WTC11 (cell line): ENCODE measurements at regions of chr6 and their contacts with region 1.

Region 1: DNA sequence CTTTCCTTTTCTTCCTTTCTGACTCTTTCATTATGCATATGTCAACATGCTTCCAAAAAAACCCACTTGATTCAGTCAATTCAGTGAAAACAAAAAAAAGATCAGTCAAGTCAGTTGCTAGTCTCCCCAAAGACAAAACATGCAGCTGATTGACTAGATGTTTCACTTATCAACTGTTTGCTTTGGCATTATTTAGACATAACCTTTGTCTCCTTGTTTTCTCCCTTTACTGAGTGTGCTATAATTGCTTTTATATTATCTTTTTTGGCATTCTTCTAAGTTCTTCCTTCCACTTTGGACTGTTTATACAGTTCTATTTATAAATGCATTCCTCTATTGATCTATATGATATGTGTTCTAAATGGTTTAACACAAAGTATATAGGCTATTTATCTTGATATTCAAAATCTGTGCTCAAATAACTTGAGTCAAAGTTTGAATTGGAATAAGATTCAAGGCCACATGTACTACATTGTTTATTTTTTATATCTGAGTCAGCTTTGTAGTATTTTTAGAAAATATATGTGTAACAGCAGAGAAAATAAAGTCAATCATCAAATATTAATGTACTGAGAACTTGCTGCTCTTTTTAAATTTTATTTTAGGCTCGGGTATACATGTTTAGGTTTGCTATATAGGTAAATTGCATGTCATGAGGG is 260.5 kb downstream of the CENPW start:
- DNase-seq: no peak
- ATAC-seq: no peak
- H3K4me3 Mint-ChIP-seq: no peak overlapping the region
- H3K27ac Mint-ChIP-seq: no peak overlapping the region
- H3K4me1 Mint-ChIP-seq: no peaks in the 10 kb centered on the region
- H3K27me3 Mint-ChIP-seq: no peaks in the 10 kb centered on the region; the same call in 1 of the 2 replicates
- CTCF ChIP-seq: no peak

Region 2: GRCh38 chr6:126504792-126505191 is 95.6 kb before region 1 on chr6:
- CTCF ChIA-PET with region 1: no interaction called
- POLR2A ChIA-PET with region 1: no interaction called
- DNase-seq: no peak
- ATAC-seq: no peak
- H3K4me3 Mint-ChIP-seq: no peak overlapping the region
- H3K27ac Mint-ChIP-seq: no peak overlapping the region
- H3K4me1 Mint-ChIP-seq: no peaks in the 10 kb centered on the region
- H3K27me3 Mint-ChIP-seq: no peaks in the 10 kb centered on the region
- CTCF ChIP-seq: no peak

Region 3: DNA sequence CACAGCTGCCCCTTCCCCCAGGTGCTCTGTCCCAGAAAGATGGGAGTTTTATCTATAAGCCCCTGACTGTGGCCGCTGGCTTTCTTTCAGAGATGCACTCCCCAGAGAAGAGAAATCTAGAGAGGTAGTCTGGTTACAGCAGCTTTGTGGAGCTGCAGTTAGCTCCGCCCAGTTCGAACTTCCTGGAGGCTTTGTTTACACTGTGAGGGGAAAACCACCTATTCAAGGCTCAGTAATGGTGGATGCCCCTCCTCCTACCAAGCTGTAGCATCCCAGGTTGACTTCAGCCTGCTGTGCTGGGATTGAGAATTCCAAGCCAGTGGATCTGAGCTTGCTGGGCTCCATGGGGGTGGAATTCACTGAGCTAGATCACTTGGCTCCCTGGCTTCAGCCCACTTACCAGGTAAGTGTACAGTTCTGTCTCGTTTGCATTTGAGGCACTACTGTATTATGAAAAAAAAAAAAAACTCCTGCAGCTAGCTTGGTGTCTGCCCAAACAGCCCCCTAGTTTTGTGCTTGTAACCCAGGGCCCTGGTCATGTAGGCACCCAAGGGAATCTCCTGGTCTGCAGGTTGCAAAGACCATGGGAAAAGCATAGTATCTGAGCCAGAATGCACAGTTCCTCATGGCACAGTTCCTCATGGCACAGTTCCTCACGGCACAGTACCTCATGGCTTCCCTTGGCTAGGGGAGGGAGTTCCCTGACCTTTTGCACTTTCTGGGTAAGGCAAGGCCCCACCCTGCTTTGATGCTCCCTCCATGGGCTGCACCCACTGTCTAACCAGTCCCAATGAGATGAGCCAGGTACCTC is 14.5 kb after region 1 on chr6:
- CTCF ChIA-PET with region 1: no interaction called
- POLR2A ChIA-PET with region 1: interaction called, 10 read pairs
- DNase-seq: peak; percentile 57
- ATAC-seq: peak; percentile 99
- H3K4me3 Mint-ChIP-seq: no peak overlapping the region
- H3K27ac Mint-ChIP-seq: no peak overlapping the region
- H3K4me1 Mint-ChIP-seq: peaks cover 12% of the 10 kb centered on the region
- H3K27me3 Mint-ChIP-seq: no peaks in the 10 kb centered on the region
- CTCF ChIP-seq: no peak

Region 4: GRCh38 chr6:127022302-127022701 is 421.9 kb after region 1 on chr6:
- CTCF ChIA-PET with region 1: no interaction called
- POLR2A ChIA-PET with region 1: no interaction called
- DNase-seq: no peak
- ATAC-seq: no peak
- H3K4me3 Mint-ChIP-seq: no peak overlapping the region
- H3K27ac Mint-ChIP-seq: no peak overlapping the region
- H3K4me1 Mint-ChIP-seq: no peaks in the 10 kb centered on the region
- H3K27me3 Mint-ChIP-seq: no peaks in the 10 kb centered on the region
- CTCF ChIP-seq: no peak